CD8-positive, alpha-beta T cell (primary cell): ENCODE measurements at regions of chr16 and their contacts with region 1.

Region 1: GRCh38 chr16:66977341-66978113 is 10.9 kb upstream of the CES4A start:
- DNase-seq: peak; percentile 71 to 95 (median 88)
- ATAC-seq: peak; percentile 99
- H3K4me3 ChIP-seq: no peak overlapping the region
- H3K4me3 Mint-ChIP-seq: no peak overlapping the region
- H3K27ac ChIP-seq: no peak overlapping the region
- H3K27ac Mint-ChIP-seq: no peak overlapping the region
- H3K4me1 ChIP-seq: no peaks in the 10 kb centered on the region
- H3K4me1 Mint-ChIP-seq: peaks cover 11% of the 10 kb centered on the region
- H3K27me3 ChIP-seq: no peaks in the 10 kb centered on the region
- H3K27me3 Mint-ChIP-seq: no peaks in the 10 kb centered on the region
- CTCF ChIP-seq: peak; percentile 92

Region 2: DNA sequence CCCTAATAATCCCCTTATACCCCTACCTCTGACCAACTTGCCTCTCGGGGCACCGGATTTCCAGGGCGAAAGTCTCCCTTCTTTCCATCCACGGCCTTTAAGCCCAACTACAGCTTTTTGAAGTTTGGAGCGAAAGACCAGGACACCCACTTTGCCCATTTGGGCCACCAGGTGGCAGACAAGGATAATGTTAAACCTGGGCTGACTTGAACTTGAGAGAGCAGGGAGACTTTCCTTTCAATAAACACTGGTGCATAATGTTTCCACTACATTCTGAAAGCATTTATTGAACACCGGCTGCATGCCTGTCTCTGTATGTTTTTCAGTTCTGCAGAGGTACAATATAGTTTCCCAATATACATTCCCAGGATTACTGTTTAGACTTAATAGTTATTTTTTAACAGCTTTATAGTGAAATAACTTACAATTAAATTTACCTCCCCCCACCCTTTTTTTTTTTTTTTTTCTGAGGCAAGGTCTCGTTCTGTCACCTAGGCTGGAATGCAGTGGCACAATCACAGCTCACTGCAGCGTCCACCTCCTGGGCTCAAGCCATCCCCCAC is 23.3 kb before region 1 on chr16:
- CTCF ChIA-PET with region 1: interaction called, 11 read pairs
- POLR2A ChIA-PET with region 1: no interaction called
- intact Hi-C with region 1: no loop called
- DNase-seq: peak; percentile 56 to 81 (median 74)
- ATAC-seq: peak; percentile 91
- H3K4me3 ChIP-seq: no peak overlapping the region
- H3K4me3 Mint-ChIP-seq: no peak overlapping the region
- H3K27ac ChIP-seq: no peak overlapping the region
- H3K27ac Mint-ChIP-seq: no peak overlapping the region
- H3K4me1 ChIP-seq: peaks cover under 1% of the 10 kb centered on the region
- H3K4me1 Mint-ChIP-seq: peaks cover 6% of the 10 kb centered on the region
- H3K27me3 ChIP-seq: peaks cover 2 to 7% of the 10 kb centered on the region in 2 experiments
- H3K27me3 Mint-ChIP-seq: peaks cover 37% of the 10 kb centered on the region
- CTCF ChIP-seq: peak; percentile 85

Region 3: GRCh38 chr16:67104061-67104460 is 126.5 kb after region 1 on chr16:
- CTCF ChIA-PET with region 1: interaction called, 54 read pairs
- POLR2A ChIA-PET with region 1: no interaction called
- intact Hi-C with region 1: loop called (anchors 1 kb)
- DNase-seq: peak in 2 of 9 experiments; percentile 9 to 10
- ATAC-seq: no peak
- H3K4me3 ChIP-seq: no peak overlapping the region
- H3K4me3 Mint-ChIP-seq: no peak overlapping the region
- H3K27ac ChIP-seq: no peak overlapping the region
- H3K27ac Mint-ChIP-seq: no peak overlapping the region
- H3K4me1 ChIP-seq: peaks cover 3% of the 10 kb centered on the region
- H3K4me1 Mint-ChIP-seq: no peaks in the 10 kb centered on the region
- H3K27me3 ChIP-seq: no peaks in the 10 kb centered on the region
- H3K27me3 Mint-ChIP-seq: no peaks in the 10 kb centered on the region
- CTCF ChIP-seq: no peak

Region 4: GRCh38 chr16:67415872-67416793 is 438.6 kb after region 1 on chr16 and contains the start of gene ZDHHC1:
- CTCF ChIA-PET with region 1: no interaction called
- POLR2A ChIA-PET with region 1: no interaction called
- intact Hi-C with region 1: loop called in 1 of 2 experiments (anchors 5 kb)
- DNase-seq: peak; percentile 16 to 67 (median 44)
- ATAC-seq: peak; percentile 88
- H3K4me3 ChIP-seq: peak within 1 kb of the TSS; percentile 35 to 55
- H3K4me3 Mint-ChIP-seq: peak within 1 kb of the TSS; percentile 75
- H3K27ac ChIP-seq: no peak within 1 kb of the TSS
- H3K27ac Mint-ChIP-seq: no peak within 1 kb of the TSS
- H3K4me1 ChIP-seq: peaks cover 5% of the 10 kb centered on the region
- H3K4me1 Mint-ChIP-seq: peaks cover 7% of the 10 kb centered on the region
- H3K27me3 ChIP-seq: no peaks in the 10 kb centered on the region
- H3K27me3 Mint-ChIP-seq: peaks cover 25% of the 10 kb centered on the region
- CTCF ChIP-seq: no peak
- total RNA-seq, gene ZDHHC1: not detected